ENCODE measurements at regions of chr19 and their contacts with region 1.

Region 1: DNA sequence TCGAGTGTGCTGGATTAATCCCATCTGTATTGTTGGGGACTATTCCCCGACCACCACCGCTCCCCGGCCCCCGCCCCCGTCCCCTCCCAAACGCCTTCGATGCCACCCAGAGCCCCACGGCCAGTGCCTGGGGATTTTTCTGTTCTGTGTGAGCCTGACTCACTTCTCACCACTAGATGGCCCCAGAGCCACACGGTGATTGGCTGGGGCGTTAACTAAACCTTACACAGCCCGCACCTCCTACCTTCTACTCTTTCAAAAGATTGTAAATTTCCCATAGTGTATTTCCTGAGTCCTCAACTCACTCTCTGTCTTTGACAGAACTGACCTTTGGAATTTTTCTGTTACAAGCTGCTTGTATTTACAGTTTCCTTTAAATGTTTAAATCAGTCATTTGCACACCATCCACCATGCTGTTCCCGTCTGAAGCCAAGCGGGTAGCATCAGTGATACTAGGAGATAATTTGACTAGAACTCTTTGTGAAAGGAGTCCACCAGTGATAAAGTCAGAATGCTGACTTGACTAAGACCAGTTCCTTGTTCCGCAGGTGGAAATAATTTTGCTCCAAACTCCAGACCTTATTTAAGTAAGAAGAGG is 61.4 kb downstream of the RFX2 start:
- DNase-seq: peak; percentile 62 to 88 (median 79)
- ATAC-seq: peak; percentile 100
- H3K4me3 ChIP-seq: no peak overlapping the region
- H3K4me3 Mint-ChIP-seq: no peak overlapping the region
- H3K27ac ChIP-seq: no peak overlapping the region
- H3K27ac Mint-ChIP-seq: no peak overlapping the region
- H3K4me1 ChIP-seq: peaks cover 3% of the 10 kb centered on the region
- H3K4me1 Mint-ChIP-seq: peaks cover 4% of the 10 kb centered on the region
- H3K27me3 ChIP-seq: no peaks in the 10 kb centered on the region
- H3K27me3 Mint-ChIP-seq: no peaks in the 10 kb centered on the region
- CTCF ChIP-seq: peak; percentile 84

Region 2: DNA sequence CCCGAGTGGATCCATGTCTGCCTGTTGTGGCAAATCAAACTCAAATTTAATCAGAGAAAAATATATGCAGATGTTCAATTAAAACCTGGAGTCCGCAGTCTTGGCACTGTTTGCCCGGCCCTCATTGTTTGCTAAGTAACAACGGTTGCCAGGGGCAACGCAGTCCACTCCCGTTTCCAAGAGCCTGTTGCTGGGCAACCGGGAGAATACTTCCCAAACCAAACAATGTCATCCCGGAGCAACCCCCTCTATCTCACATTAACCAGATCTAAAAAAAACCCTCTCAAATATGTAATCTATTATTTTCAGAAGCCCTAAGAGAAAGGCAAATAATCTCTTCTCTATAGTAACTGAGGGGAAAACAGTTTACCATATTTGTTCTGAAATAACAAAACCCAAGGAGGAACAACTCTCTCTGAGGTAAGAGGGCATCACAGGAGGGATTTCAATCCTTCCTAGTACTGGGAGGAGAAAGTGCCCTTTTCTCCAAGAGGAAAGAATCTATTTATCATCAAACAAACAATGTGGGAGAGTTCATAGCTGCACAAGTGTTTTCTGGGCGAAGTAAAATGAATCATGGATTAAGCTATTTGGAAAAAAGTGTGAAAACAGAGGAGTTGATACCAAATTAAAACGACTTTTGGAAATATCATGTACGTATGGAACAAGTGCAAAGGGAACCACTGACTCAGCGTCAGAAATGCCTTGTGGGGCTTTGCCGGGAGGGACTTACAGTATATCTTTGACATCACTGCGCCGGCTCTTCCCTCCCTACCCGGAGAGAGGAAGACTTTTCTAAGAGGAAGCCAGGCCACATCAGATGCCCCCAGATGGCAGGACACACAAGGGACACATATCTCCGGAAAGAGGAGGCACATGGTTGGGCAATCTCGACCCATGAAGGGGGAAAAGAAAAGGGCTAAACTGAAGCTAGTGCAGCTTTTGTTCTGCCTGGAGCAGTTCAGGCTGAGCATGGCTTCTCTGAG is 18.0 kb after region 1 on chr19:
- CTCF ChIA-PET with region 1: interaction called, 18 read pairs
- POLR2A ChIA-PET with region 1: no interaction called
- intact Hi-C with region 1: no loop called
- DNase-seq: peak in 4 of 9 experiments; percentile 29 to 62 (median 45)
- ATAC-seq: no peak
- H3K4me3 ChIP-seq: no peak overlapping the region
- H3K4me3 Mint-ChIP-seq: no peak overlapping the region
- H3K27ac ChIP-seq: no peak overlapping the region
- H3K27ac Mint-ChIP-seq: peak overlapping the region; percentile 33
- H3K4me1 ChIP-seq: peaks cover 20% of the 10 kb centered on the region
- H3K4me1 Mint-ChIP-seq: peaks cover 36% of the 10 kb centered on the region
- H3K27me3 ChIP-seq: no peaks in the 10 kb centered on the region
- H3K27me3 Mint-ChIP-seq: no peaks in the 10 kb centered on the region
- CTCF ChIP-seq: no peak

Region 3: DNA sequence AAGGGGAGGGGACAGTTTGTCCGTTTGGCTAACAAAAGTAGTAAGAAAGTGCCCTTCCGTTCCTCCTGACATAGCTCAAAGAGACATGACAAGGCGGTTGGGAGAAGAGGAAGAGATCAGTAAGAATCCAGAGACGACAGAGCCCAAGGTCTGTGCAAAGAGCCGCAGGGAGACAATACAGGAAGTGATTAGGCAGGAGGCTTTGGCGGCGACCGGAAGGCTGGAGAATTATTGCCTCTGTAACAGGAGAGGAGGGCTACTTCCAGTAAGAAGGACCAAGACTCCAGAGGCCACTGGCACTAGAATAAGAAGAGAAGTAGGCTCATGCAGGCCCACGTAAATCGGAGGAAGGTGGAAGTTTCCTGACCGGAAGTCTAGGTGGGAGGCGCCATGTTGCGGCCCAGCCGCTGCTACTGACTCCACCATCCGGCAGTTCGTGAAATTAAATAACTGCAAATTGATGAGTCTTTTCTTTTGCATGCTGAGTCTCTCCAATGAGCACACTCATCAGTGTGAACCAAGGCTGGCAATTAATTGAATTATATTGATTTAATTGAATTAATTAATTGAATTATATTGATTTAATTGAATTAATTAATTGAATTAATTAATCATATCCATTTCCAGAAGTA is 51.5 kb after region 1 on chr19:
- CTCF ChIA-PET with region 1: interaction called, 14 read pairs
- POLR2A ChIA-PET with region 1: interaction called, 3 read pairs
- intact Hi-C with region 1: loop called in 1 of 2 experiments (anchors 2 kb)
- DNase-seq: peak in 5 of 9 experiments; percentile 20 to 73 (median 43)
- ATAC-seq: peak; percentile 36
- H3K4me3 ChIP-seq: peak overlapping the region; percentile 35 to 40
- H3K4me3 Mint-ChIP-seq: peak overlapping the region; percentile 74
- H3K27ac ChIP-seq: peak overlapping the region in 1 of 2 experiments; percentile 48
- H3K27ac Mint-ChIP-seq: peak overlapping the region; percentile 72
- H3K4me1 ChIP-seq: peaks cover 4% of the 10 kb centered on the region
- H3K4me1 Mint-ChIP-seq: peaks cover 15% of the 10 kb centered on the region
- H3K27me3 ChIP-seq: no peaks in the 10 kb centered on the region
- H3K27me3 Mint-ChIP-seq: no peaks in the 10 kb centered on the region
- CTCF ChIP-seq: no peak

Region 4: GRCh38 chr19:6105444-6105843 is 56.5 kb after region 1 on chr19:
- CTCF ChIA-PET with region 1: interaction called, 14 read pairs
- POLR2A ChIA-PET with region 1: no interaction called
- intact Hi-C with region 1: loop called in 1 of 2 experiments (anchors 2 kb)
- DNase-seq: no peak
- ATAC-seq: no peak
- H3K4me3 ChIP-seq: no peak overlapping the region
- H3K4me3 Mint-ChIP-seq: no peak overlapping the region
- H3K27ac ChIP-seq: no peak overlapping the region
- H3K27ac Mint-ChIP-seq: no peak overlapping the region
- H3K4me1 ChIP-seq: peaks cover 18% of the 10 kb centered on the region
- H3K4me1 Mint-ChIP-seq: peaks cover 22% of the 10 kb centered on the region
- H3K27me3 ChIP-seq: peaks cover 0 to 13% of the 10 kb centered on the region in 2 experiments
- H3K27me3 Mint-ChIP-seq: no peaks in the 10 kb centered on the region
- CTCF ChIP-seq: no peak

Region 5: DNA sequence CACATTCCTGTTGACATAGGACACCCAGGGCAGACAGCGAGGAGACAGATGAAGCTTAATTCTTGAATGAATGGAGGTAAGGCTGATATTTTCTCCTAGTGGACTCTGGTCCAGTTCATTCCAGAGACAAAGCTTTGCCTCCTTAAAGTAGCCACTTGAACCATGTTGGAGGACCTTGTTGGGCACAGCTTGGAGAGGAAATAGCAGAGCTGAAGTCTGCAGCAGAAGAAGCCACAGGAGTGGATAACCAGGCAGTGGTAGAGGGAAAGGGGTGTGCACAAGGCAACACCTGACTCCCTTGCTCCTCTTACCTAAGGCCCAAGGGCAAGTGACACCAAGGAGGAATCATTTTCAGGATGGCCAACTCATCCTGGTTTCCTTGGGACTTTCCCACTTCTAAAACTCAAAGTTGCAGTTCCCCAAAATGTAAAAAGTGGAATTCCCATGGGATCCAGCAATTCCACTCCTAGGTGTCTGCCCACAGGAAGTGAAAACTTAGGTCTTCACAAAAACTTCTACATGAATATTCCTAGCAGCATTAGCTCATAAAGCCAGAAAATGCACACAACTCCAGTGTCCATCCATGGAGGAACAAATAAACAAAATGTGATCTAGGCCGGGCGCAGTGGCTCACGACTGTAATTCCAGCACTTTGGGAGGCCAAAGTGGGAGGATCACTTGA is 68.0 kb after region 1 on chr19:
- CTCF ChIA-PET with region 1: interaction called, 13 read pairs
- POLR2A ChIA-PET with region 1: no interaction called
- intact Hi-C with region 1: no loop called
- DNase-seq: no peak
- ATAC-seq: no peak
- H3K4me3 ChIP-seq: no peak overlapping the region
- H3K4me3 Mint-ChIP-seq: no peak overlapping the region
- H3K27ac ChIP-seq: no peak overlapping the region
- H3K27ac Mint-ChIP-seq: no peak overlapping the region
- H3K4me1 ChIP-seq: no peaks in the 10 kb centered on the region
- H3K4me1 Mint-ChIP-seq: no peaks in the 10 kb centered on the region
- H3K27me3 ChIP-seq: peaks cover 0 to 2% of the 10 kb centered on the region in 2 experiments
- H3K27me3 Mint-ChIP-seq: peaks cover 6% of the 10 kb centered on the region
- CTCF ChIP-seq: no peak

Region 6: DNA sequence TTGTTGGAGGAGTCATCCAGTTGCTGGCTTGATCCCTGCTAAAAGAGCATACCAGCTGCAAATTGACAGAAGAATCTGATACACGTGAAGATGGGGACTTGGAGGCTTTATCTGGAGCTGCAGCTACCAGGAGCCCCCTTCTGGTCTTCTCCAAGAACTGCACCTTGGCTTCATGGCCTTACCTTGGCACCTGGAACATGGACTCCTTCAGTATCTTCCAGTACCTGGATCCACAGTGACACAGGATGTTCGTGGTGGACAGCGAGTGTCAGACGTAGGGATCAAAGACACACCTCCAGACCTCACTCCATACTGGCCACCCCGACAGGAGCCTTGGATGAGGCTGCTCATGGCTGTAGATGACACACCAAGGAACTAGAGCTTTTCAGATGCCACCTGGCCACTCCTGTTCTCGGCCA is 76.7 kb after region 1 on chr19:
- CTCF ChIA-PET with region 1: interaction called, 138 read pairs
- POLR2A ChIA-PET with region 1: interaction called, 8 read pairs
- intact Hi-C with region 1: loop called in 1 of 2 experiments (anchors 1 kb)
- DNase-seq: peak; percentile 32 to 86 (median 65)
- ATAC-seq: peak; percentile 95
- H3K4me3 ChIP-seq: no peak overlapping the region
- H3K4me3 Mint-ChIP-seq: no peak overlapping the region
- H3K27ac ChIP-seq: no peak overlapping the region
- H3K27ac Mint-ChIP-seq: no peak overlapping the region
- H3K4me1 ChIP-seq: no peaks in the 10 kb centered on the region
- H3K4me1 Mint-ChIP-seq: no peaks in the 10 kb centered on the region
- H3K27me3 ChIP-seq: no peaks in the 10 kb centered on the region
- H3K27me3 Mint-ChIP-seq: no peaks in the 10 kb centered on the region
- CTCF ChIP-seq: peak; percentile 83

Region 7: DNA sequence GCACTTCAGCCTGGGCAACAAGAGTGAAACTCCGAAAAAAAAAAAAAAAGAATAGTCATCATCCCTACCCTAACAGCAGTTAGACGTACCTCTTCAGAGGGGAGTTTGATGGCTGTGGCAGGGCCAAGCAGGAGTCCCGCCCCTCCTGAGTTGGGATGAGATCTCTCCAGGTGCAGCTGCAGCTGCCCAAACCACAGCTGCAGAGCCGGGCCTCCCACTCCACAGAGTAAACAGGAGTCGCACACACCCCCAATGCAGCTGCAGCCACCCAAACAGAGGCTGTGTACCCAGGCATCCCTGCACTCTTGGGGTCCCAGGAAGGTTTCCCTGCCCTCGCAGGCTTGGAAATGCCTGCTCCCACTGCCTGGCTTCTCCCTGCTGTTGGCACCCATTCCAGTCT is 248.3 kb after region 1 on chr19:
- CTCF ChIA-PET with region 1: interaction called, 3 read pairs
- POLR2A ChIA-PET with region 1: interaction called, 3 read pairs
- intact Hi-C with region 1: loop called in 1 of 2 experiments (anchors 2 kb)
- DNase-seq: no peak
- ATAC-seq: no peak
- H3K4me3 ChIP-seq: no peak overlapping the region
- H3K4me3 Mint-ChIP-seq: no peak overlapping the region
- H3K27ac ChIP-seq: no peak overlapping the region
- H3K27ac Mint-ChIP-seq: no peak overlapping the region
- H3K4me1 ChIP-seq: no peaks in the 10 kb centered on the region
- H3K4me1 Mint-ChIP-seq: peaks cover 3% of the 10 kb centered on the region
- H3K27me3 ChIP-seq: peaks cover 0 to 2% of the 10 kb centered on the region in 2 experiments
- H3K27me3 Mint-ChIP-seq: peaks cover 2% of the 10 kb centered on the region
- CTCF ChIP-seq: no peak